K562 (cell line): ENCODE measurements at regions of chr3 and their contacts with region 1.

Region 1: GRCh38 chr3:71512000-71512399 is 71.5 kb downstream of the FOXP1 start:
- DNase-seq: peak; percentile 12 to 78 (median 50)
- ATAC-seq: peak; percentile 96
- H3K4me3 ChIP-seq: no peak overlapping the region
- H3K27ac ChIP-seq: 0 out of 3 replicates have a peak overlapping the region, but pooled peaks have one; percentile 33
- H3K4me1 ChIP-seq: peaks cover 4 to 29% of the 10 kb centered on the region in 2 experiments; a peak in 2 of 5 replicates
- H3K27me3 ChIP-seq: no peaks in the 10 kb centered on the region
- CTCF ChIP-seq: peak; percentile 55 to 67 (median 62)
- EP300 ChIP-seq: no peak
- POLR2A ChIP-seq: no peak
- RAD21 ChIP-seq: peak; percentile 59 to 80

Region 2: GRCh38 chr3:71069797-71070196 is 442.2 kb before region 1 on chr3:
- CTCF ChIA-PET with region 1: no interaction called
- POLR2A ChIA-PET with region 1: no interaction called
- in situ Hi-C with region 1: no loop called
- intact Hi-C with region 1: loop called (anchors 5 kb)
- DNase-seq: peak; percentile 37 to 64 (median 48)
- ATAC-seq: peak; percentile 69
- H3K4me3 ChIP-seq: no peak overlapping the region
- H3K27ac ChIP-seq: no peak overlapping the region
- H3K4me1 ChIP-seq: peaks cover 6 to 15% of the 10 kb centered on the region in 2 experiments; a peak in 3 of 5 replicates
- H3K27me3 ChIP-seq: no peaks in the 10 kb centered on the region
- CTCF ChIP-seq: peak; percentile 57 to 65 (median 58)
- EP300 ChIP-seq: no peak
- POLR2A ChIP-seq: no peak
- RAD21 ChIP-seq: peak in 1 of 2 experiments; percentile 69; a peak in 3 of 4 replicates

Region 3: DNA sequence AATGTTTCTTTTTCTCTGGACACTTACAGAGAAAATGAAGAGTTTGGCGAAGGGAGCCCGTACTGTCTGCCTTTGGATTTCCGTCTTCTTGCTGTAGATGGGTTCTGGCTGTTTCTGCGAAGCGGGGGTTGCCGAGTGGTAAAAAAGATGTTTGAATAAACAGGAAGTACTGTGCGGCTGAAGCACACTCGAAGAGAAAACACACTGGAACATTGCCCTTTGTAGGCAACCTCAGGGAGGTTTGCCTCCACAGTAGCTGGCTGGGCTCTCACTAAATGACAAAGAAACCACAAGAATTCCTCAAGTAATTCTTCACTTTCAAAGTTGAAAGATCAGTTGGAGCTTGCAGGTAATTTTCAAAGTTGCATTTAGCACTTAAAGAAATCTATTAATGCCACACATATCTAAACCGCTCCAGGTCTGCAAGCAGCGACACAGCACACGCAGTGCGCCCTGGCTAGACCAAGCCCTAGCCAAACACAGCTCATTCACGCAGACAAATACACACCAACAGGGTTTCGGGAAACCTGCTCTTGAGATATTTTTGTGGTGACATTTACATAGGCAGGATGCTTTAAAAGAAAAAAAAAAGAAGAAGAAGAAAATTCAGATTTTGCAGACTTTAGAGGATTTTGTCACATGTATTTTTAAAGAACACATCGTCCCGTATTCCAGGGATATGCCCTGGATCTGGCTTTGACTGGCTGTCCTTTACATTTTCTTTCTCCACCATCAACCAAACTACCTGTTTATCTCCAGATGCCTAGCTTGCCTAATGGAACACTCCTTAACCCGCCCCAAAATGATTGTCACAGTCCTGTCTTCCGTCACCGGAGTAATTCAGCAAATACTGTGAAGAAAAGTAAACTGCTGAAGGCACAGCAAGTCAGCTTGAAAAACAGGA is 381.3 kb before region 1 on chr3:
- CTCF ChIA-PET with region 1: no interaction called
- POLR2A ChIA-PET with region 1: no interaction called
- in situ Hi-C with region 1: no loop called
- intact Hi-C with region 1: loop called (anchors 10 kb)
- DNase-seq: peak in 2 of 4 experiments; percentile 47 to 76
- ATAC-seq: peak; percentile 73
- H3K4me3 ChIP-seq: peak overlapping the region; percentile 43
- H3K27ac ChIP-seq: peak overlapping the region; percentile 83
- H3K4me1 ChIP-seq: peaks cover 0 to 27% of the 10 kb centered on the region in 2 experiments; a peak in 4 of 5 replicates
- H3K27me3 ChIP-seq: no peaks in the 10 kb centered on the region
- CTCF ChIP-seq: no peak
- EP300 ChIP-seq: no peak
- POLR2A ChIP-seq: peak; percentile 57
- RAD21 ChIP-seq: no peak

Region 4: DNA sequence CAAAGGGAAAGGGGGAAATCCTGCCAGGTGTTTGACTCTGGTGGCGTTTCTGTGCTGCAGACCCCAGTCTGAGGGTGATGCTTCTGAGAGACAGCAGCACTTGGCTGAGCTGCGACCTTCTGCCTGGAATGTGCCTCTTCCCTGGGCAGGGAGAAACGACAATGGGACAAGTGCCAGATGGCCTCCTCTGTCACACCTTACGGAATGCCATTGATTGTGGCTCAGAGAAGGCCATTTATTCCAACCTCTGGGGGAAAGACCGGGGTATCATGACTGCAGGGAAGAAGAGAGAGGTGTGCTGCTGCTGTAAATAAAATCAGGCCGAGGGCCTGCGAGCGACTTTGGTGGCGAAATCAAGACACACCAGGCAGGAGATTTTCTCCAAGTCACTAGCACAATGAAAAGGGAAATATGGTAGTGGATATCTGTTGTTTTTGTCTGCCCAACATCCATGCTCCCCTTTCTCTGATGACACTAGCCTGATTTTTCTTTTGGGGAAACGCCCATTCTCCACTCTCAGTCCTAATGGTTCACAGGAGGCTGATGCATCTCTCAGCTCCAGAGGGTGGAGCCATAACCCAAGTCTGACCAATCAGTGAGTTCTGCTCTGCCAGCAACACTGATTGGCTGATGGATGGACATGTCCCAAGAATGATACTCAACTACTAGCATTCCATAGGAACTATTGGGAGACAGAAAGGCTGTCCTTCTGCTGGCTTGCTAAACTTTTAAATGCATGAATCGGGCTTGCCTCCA is 264.6 kb before region 1 on chr3:
- CTCF ChIA-PET with region 1: no interaction called
- POLR2A ChIA-PET with region 1: no interaction called
- in situ Hi-C with region 1: no loop called
- intact Hi-C with region 1: loop called (anchors 5 kb)
- DNase-seq: peak; percentile 70 to 85 (median 74)
- ATAC-seq: peak; percentile 92
- H3K4me3 ChIP-seq: no peak overlapping the region
- H3K27ac ChIP-seq: no peak overlapping the region
- H3K4me1 ChIP-seq: peaks cover 7 to 16% of the 10 kb centered on the region in 2 experiments; a peak in 3 of 5 replicates
- H3K27me3 ChIP-seq: no peaks in the 10 kb centered on the region
- CTCF ChIP-seq: 0 out of 6 replicates have a peak, but pooled peaks of 1 of the 3 experiments have one; percentile 5
- EP300 ChIP-seq: no peak
- POLR2A ChIP-seq: no peak
- RAD21 ChIP-seq: no peak; a peak in 1 of 4 replicates

Region 5: DNA sequence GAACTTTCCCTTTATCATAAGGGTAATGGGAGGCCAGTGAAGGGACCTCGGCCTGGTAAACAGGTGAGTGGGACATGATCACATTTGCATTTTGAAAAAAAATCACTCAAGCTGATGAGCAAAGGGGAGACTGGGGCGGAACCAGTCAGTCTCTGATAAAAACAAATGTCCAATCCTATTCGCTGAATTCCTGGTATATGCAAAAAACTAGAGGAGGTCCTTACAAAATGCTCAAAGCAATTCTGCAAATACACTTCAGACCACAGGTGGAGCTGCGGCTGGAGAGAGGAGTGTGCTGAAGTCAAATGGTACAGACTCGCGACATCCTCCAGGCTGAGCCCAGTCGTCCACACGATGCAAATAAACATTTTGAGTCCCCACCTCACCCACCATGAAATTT is 95.1 kb before region 1 on chr3:
- CTCF ChIA-PET with region 1: no interaction called
- POLR2A ChIA-PET with region 1: no interaction called
- in situ Hi-C with region 1: no loop called
- intact Hi-C with region 1: loop called (anchors 2 kb)
- DNase-seq: peak; percentile 31 to 84 (median 56)
- ATAC-seq: peak; percentile 99
- H3K4me3 ChIP-seq: no peak overlapping the region
- H3K27ac ChIP-seq: no peak overlapping the region
- H3K4me1 ChIP-seq: no peaks in the 10 kb centered on the region; a peak in 2 of 5 replicates
- H3K27me3 ChIP-seq: no peaks in the 10 kb centered on the region
- CTCF ChIP-seq: peak; percentile 54 to 65 (median 58)
- EP300 ChIP-seq: no peak
- POLR2A ChIP-seq: no peak
- RAD21 ChIP-seq: peak; percentile 22 to 26; a peak in 1 of 4 replicates

Region 6: GRCh38 chr3:71478568-71478967 is 33.4 kb before region 1 on chr3:
- CTCF ChIA-PET with region 1: no interaction called
- POLR2A ChIA-PET with region 1: no interaction called
- in situ Hi-C with region 1: no loop called
- intact Hi-C with region 1: no loop called
- DNase-seq: no peak
- ATAC-seq: no peak
- H3K4me3 ChIP-seq: no peak overlapping the region
- H3K27ac ChIP-seq: no peak overlapping the region
- H3K4me1 ChIP-seq: no peaks in the 10 kb centered on the region
- H3K27me3 ChIP-seq: no peaks in the 10 kb centered on the region
- CTCF ChIP-seq: no peak
- EP300 ChIP-seq: no peak
- POLR2A ChIP-seq: no peak
- RAD21 ChIP-seq: no peak

Region 7: GRCh38 chr3:71652781-71653413 is 140.9 kb after region 1 on chr3:
- CTCF ChIA-PET with region 1: no interaction called
- POLR2A ChIA-PET with region 1: no interaction called
- in situ Hi-C with region 1: no loop called
- intact Hi-C with region 1: loop called (anchors 10 kb)
- DNase-seq: peak; percentile 16 to 61 (median 28)
- ATAC-seq: peak; percentile 81
- H3K4me3 ChIP-seq: no peak overlapping the region
- H3K27ac ChIP-seq: no peak overlapping the region
- H3K4me1 ChIP-seq: no peaks in the 10 kb centered on the region; a peak in 1 of 5 replicates
- H3K27me3 ChIP-seq: peaks cover under 1% of the 10 kb centered on the region in 2 experiments; a peak in 3 of 5 replicates
- CTCF ChIP-seq: peak in 2 of 3 experiments; percentile 53 to 72; a peak in 4 of 6 replicates
- EP300 ChIP-seq: no peak
- POLR2A ChIP-seq: no peak
- RAD21 ChIP-seq: peak; percentile 64 to 83